Activated naive CD4-positive, alpha-beta T cell treated with anti-CD3 and anti-CD28 coated beads for 36 hours (primary cell): ENCODE measurements at regions of chr14 and their contacts with region 1.

Region 1: GRCh38 chr14:52272375-52272774 is 4.9 kb downstream of the PTGDR start:
- DNase-seq: peak; percentile 40
- H3K4me3 Mint-ChIP-seq: no peak overlapping the region
- H3K27ac Mint-ChIP-seq: no peak overlapping the region
- H3K4me1 Mint-ChIP-seq: peaks cover 16% of the 10 kb centered on the region
- H3K27me3 Mint-ChIP-seq: peaks cover 33% of the 10 kb centered on the region

Region 2: GRCh38 chr14:51996148-51996746 is 276.1 kb before region 1 on chr14:
- CTCF ChIA-PET with region 1: interaction called, 3 read pairs
- intact Hi-C with region 1: loop called (anchors 1 kb)
- DNase-seq: no peak
- H3K4me3 Mint-ChIP-seq: no peak overlapping the region
- H3K27ac Mint-ChIP-seq: no peak overlapping the region
- H3K4me1 Mint-ChIP-seq: peaks cover 33% of the 10 kb centered on the region
- H3K27me3 Mint-ChIP-seq: no peaks in the 10 kb centered on the region

Region 3: GRCh38 chr14:52021957-52022600 is 250.3 kb before region 1 on chr14:
- CTCF ChIA-PET with region 1: no interaction called
- intact Hi-C with region 1: loop called (anchors 10 kb)
- DNase-seq: peak; percentile 14
- H3K4me3 Mint-ChIP-seq: no peak overlapping the region
- H3K27ac Mint-ChIP-seq: no peak overlapping the region
- H3K4me1 Mint-ChIP-seq: peaks cover 42% of the 10 kb centered on the region
- H3K27me3 Mint-ChIP-seq: no peaks in the 10 kb centered on the region

Region 4: GRCh38 chr14:52043690-52044089 is 228.7 kb before region 1 on chr14:
- CTCF ChIA-PET with region 1: interaction called, 3 read pairs
- intact Hi-C with region 1: loop called (anchors 1 kb)
- DNase-seq: peak; percentile 48
- H3K4me3 Mint-ChIP-seq: no peak overlapping the region
- H3K27ac Mint-ChIP-seq: no peak overlapping the region
- H3K4me1 Mint-ChIP-seq: peaks cover 19% of the 10 kb centered on the region
- H3K27me3 Mint-ChIP-seq: no peaks in the 10 kb centered on the region

Region 5: DNA sequence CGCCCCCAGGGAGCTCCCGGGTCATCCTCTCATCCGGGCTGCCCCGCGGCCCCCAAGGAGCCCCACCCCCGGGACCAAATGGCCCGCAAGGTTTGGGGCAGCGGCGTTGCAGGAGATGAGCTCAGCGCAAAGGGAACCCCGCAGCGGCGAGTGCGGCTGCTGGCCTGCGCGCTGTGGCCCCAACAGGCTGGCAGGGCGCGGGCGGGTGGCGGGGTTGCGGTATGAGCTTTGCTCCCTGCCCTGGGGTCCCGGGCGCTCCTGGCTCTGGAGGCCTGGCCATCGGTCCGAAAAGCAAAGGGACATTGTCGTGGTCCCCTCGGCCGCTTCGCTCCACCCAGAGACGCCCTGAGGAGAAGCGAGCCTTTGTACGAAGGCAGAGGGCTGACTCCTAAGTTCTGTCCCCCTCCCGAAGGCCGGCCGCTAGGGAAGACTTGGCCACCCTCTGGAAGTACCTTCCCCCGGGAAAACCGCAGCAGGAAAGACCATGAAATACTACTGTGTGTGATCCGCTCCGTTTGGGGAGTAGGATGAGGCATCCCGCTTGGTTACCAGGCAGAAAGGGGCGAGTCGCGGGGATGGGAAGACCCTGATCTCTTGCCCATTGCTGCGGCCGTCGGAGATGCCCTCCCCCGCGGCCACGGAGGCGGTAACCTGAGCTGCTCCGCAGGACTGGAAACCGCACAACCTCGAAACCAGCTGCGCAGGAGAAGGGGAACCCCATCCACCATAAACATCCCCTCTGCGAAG is 202.9 kb before region 1 on chr14:
- CTCF ChIA-PET with region 1: no interaction called
- intact Hi-C with region 1: loop called (anchors 5 kb)
- DNase-seq: peak; percentile 38
- H3K4me3 Mint-ChIP-seq: peak overlapping the region; percentile 38
- H3K27ac Mint-ChIP-seq: no peak overlapping the region
- H3K4me1 Mint-ChIP-seq: peaks cover 27% of the 10 kb centered on the region
- H3K27me3 Mint-ChIP-seq: peaks cover 49% of the 10 kb centered on the region

Region 6: GRCh38 chr14:52240623-52241022 is 31.8 kb before region 1 on chr14:
- CTCF ChIA-PET with region 1: no interaction called
- intact Hi-C with region 1: loop called (anchors 1 kb)
- DNase-seq: no peak
- H3K4me3 Mint-ChIP-seq: no peak overlapping the region
- H3K27ac Mint-ChIP-seq: no peak overlapping the region
- H3K4me1 Mint-ChIP-seq: peaks cover 4% of the 10 kb centered on the region
- H3K27me3 Mint-ChIP-seq: no peaks in the 10 kb centered on the region